Natural killer cell (primary cell): ENCODE measurements at regions of chr3 and their contacts with region 1.

Region 1: DNA sequence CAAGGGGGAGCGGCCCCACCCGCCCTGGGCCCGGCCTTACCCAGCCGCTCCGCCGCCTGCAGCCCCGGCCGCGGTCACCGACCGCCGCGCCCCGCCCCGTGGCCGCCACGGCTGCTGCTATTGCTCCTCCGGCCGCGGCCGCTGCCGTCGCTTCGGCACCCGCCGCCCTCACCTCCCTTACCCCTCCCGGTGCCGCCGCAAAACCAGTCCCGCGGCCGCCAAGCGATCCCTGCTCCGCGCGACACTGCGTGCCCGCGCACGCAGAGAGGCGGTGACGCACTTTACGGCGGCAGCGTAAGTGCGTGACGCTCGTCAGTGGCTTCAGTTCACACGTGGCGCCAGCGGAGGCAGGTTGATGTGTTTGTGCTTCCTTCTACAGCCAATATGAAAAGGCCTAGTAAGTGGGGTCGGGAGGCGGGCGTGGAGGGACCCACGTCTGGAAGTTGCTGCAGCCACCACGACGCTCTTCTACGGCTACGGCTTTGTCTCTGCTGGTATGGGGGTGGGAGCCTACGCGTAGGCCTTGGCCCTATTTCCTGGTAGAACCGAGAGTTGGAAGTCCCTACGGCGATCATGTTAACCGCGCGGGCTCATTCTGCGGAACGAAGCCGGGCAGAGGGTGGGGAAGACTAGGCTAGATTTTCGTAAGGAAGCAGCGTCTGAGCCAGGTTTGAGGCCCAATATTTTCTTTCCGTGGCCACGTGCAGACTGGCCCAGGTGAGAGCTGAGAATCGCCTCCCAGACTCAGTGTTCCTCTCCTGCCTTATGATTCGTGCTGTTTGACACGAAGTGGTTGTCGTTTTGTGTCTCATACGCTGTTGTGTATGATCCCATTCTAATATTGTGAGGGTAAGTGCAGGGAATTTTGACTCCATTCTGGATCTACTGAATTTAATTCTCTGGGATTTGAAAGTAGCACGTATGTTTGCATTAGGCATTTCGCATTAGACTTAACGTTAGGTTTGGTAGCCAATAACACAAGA is at the starts of genes GNL3 and PBRM1:
- DNase-seq: peak; percentile 90 to 97
- ATAC-seq: peak; percentile 85 to 96 (median 86)
- H3K4me3 ChIP-seq: peak within 1 kb of the TSS; percentile 77
- H3K4me3 Mint-ChIP-seq: peak within 1 kb of the TSS; percentile 92
- H3K27ac ChIP-seq: peak within 1 kb of the TSS; percentile 93
- H3K27ac Mint-ChIP-seq: peak within 1 kb of the TSS; percentile 93 to 98
- H3K4me1 ChIP-seq: peaks cover 10% of the 10 kb centered on the region
- H3K4me1 Mint-ChIP-seq: peaks cover 30 to 34% of the 10 kb centered on the region in 2 donors
- H3K27me3 ChIP-seq: no peaks in the 10 kb centered on the region
- H3K27me3 Mint-ChIP-seq: no peaks in the 10 kb centered on the region
- CTCF ChIP-seq: no peak
- total RNA-seq, gene GNL3: 70.7 to 81.1 (median 70.9) TPM
- total RNA-seq, gene PBRM1: 70.2 to 79.7 (median 76.6) TPM

Region 2: DNA sequence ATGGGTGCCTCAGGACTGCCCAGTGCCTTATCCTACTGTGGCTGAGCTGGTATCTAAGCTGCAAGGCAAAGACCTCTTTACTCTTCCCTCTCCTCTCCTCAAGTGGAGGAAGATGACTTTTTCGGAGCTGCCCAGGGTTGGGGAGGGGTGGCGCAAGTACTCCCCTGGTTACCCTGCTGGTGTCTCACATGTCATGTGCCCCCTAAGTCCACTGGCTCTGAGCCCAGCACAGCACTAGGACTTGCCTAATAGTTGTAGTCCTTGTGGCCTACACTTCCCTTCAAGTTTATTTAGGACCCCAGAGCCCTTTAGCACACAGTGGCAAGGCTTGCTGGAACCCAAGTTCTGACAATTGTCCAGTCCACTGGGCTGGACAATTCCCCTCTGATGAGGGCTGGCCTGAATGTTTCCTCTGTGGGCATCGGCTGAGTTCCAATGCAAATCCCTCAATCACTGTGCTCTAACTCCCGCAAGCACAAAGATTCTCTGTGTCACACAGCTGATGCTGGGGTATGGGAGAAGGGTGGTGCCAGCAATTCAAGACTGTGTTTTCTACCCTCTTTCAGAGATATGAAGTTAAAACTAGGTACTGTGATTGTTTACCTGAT is 89.2 kb before region 1 on chr3:
- intact Hi-C with region 1: no loop called
- DNase-seq: no peak
- ATAC-seq: no peak
- H3K4me3 ChIP-seq: no peak overlapping the region
- H3K4me3 Mint-ChIP-seq: no peak overlapping the region
- H3K27ac ChIP-seq: no peak overlapping the region
- H3K27ac Mint-ChIP-seq: peak overlapping the region in 1 of 2 donors; percentile 24
- H3K4me1 ChIP-seq: no peaks in the 10 kb centered on the region
- H3K4me1 Mint-ChIP-seq: no peaks in the 10 kb centered on the region
- H3K27me3 ChIP-seq: no peaks in the 10 kb centered on the region
- H3K27me3 Mint-ChIP-seq: no peaks in the 10 kb centered on the region
- CTCF ChIP-seq: no peak

Region 3: GRCh38 chr3:52623234-52623792 is 62.7 kb before region 1 on chr3:
- intact Hi-C with region 1: no loop called
- DNase-seq: no peak
- ATAC-seq: no peak
- H3K4me3 ChIP-seq: no peak overlapping the region
- H3K4me3 Mint-ChIP-seq: no peak overlapping the region
- H3K27ac ChIP-seq: no peak overlapping the region
- H3K27ac Mint-ChIP-seq: no peak overlapping the region
- H3K4me1 ChIP-seq: no peaks in the 10 kb centered on the region
- H3K4me1 Mint-ChIP-seq: peaks cover 7 to 8% of the 10 kb centered on the region in 2 donors
- H3K27me3 ChIP-seq: no peaks in the 10 kb centered on the region
- H3K27me3 Mint-ChIP-seq: no peaks in the 10 kb centered on the region
- CTCF ChIP-seq: no peak

Region 4: DNA sequence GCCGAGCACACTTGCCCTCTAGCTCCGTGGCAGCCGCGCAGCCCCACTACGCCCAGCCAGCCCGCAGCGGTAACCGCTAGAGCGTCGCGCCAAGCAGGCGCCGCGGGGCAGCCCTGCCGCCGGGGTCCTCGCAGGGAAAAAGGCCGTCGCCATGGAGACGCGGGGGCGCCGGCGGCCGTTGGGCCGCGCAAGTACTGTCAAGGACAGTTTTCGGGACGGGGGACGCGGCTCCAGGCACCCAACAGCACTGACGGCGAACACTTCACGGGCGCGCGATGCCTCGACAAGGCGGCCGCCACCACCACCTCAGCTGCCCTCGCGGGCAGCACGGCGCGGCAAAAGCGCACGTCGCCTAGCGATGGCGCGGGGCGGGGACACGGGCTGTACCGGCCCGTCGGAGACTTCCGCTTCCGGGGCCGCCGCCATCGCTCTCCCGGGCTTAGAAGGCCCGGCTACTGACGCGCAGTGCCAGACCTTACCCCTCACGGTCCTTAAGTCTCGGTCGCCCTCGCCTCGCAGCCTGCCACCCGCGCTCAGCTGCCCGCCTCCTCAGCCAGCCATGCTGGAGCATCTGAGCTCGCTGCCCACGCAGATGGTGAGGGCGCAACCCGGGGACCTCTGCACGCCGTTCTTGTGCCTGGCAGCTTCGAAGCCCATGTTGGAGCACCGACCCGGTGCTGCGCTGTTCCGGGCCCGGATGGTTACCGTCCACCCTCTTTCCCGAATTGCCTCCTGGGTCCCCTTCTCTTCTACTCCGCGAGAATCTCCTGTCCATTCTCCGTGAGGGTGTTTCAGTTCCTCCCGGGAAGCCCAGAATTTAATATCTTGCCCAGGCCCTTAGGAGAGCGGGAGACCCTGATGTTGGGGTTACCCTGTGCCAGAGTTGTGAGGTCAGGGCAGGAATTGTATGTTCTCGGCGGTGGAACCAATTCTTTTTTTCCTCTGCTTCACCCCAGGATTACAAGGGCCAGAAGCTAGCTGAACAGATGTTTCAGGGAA is 20.0 kb after region 1 on chr3 and contains the starts of genes GLT8D1 and SPCS1:
- intact Hi-C with region 1: loop called (anchors 1 kb)
- DNase-seq: peak; percentile 90 to 93
- ATAC-seq: peak; percentile 90 to 96 (median 91)
- H3K4me3 ChIP-seq: peak within 1 kb of the TSS; percentile 66
- H3K4me3 Mint-ChIP-seq: peak within 1 kb of the TSS; percentile 92
- H3K27ac ChIP-seq: peak within 1 kb of the TSS; percentile 83
- H3K27ac Mint-ChIP-seq: peak within 1 kb of the TSS; percentile 94 to 95
- H3K4me1 ChIP-seq: peaks cover 29% of the 10 kb centered on the region
- H3K4me1 Mint-ChIP-seq: peaks cover 14 to 18% of the 10 kb centered on the region in 2 donors
- H3K27me3 ChIP-seq: no peaks in the 10 kb centered on the region
- H3K27me3 Mint-ChIP-seq: no peaks in the 10 kb centered on the region
- CTCF ChIP-seq: no peak
- total RNA-seq, gene GLT8D1: 31.1 to 39.4 (median 38.2) TPM
- total RNA-seq, gene SPCS1: 52.4 to 64.4 (median 57.3) TPM

Region 5: DNA sequence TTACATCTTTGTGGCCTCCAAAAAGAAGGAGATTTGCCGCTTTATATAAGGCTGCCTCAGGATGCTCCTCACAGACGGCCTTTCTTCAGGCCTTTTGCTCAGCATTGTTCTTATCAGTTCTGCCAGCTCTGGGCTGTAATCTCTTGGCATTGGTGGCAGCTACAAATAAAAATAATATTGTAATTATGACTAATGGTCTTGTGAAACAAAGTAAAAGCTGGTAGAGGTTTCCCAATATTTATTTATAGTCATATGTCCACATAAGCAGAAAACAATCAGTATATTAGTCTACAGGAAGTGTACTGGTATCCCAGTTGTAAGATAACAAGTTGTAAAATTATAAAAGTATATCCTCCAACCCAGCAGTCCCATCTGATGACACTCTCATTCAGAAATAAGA is 77.5 kb after region 1 on chr3:
- intact Hi-C with region 1: no loop called
- DNase-seq: no peak
- ATAC-seq: no peak
- H3K4me3 ChIP-seq: no peak overlapping the region
- H3K4me3 Mint-ChIP-seq: no peak overlapping the region
- H3K27ac ChIP-seq: no peak overlapping the region
- H3K27ac Mint-ChIP-seq: no peak overlapping the region
- H3K4me1 ChIP-seq: no peaks in the 10 kb centered on the region
- H3K4me1 Mint-ChIP-seq: no peaks in the 10 kb centered on the region
- H3K27me3 ChIP-seq: no peaks in the 10 kb centered on the region
- H3K27me3 Mint-ChIP-seq: no peaks in the 10 kb centered on the region
- CTCF ChIP-seq: no peak